ENCODE measurements at regions of chr9 and their contacts with region 1.

Region 1: DNA sequence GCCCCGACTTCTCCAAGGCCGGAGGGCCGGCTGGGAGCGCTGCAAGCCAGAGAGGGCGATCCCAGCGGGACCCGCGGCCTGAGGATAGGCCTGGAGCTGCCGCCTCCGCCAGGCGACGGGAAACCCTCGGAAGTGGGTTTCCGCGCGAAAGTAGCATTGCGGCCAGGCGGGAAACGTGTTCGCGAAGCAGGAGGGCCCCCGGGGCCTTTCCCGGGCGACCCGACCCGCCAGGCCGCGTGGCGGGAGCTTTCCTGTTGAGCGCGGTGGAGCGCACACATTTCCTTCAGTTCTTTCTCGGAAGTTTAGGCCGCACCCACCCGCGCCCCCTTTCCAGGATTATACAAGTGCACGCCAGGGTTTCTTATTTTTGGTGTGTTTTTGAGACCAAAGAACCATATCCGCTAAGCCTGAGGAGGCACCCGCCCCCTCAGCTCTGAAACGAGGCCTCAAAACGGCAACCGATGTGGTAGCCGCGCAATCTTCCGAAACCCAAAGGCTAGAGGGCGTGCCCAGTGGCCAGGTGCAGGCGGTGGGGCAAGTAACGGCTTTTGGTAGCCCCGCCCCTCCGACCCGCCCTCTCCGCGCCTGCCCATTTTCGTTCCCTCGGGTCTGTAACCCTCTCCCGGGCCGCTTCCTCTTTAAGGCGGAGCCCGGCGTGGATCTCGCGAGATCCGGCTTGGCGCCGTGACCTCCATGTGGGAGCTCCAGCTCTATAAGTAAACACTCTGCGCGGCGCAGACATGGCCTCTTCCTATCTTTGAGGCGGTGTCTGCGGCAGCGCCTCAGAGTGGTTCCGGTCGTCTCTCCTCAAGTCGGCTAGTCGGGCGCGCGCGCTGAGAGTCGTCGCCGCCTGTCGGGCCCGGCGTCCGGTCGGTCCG is at the start of gene UHRF2:
- DNase-seq: peak; percentile 45
- ATAC-seq: peak; percentile 97
- H3K4me3 ChIP-seq: peak within 1 kb of the TSS; percentile 65 to 74
- H3K27ac ChIP-seq: peak within 1 kb of the TSS; percentile 73; the same call in 1 of the 2 replicates
- H3K4me1 ChIP-seq: no peaks in the 10 kb centered on the region
- H3K27me3 ChIP-seq: no peaks in the 10 kb centered on the region
- CTCF ChIP-seq: no peak
- total RNA-seq, gene UHRF2: 17.2 TPM

Region 2: GRCh38 chr9:6330958-6331634 is 81.6 kb before region 1 on chr9:
- CTCF ChIA-PET with region 1: interaction called, 13 read pairs
- POLR2A ChIA-PET with region 1: no interaction called
- in situ Hi-C with region 1: no loop called
- intact Hi-C with region 1: no loop called
- DNase-seq: no peak
- ATAC-seq: no peak
- H3K4me3 ChIP-seq: no peak overlapping the region
- H3K27ac ChIP-seq: no peak overlapping the region
- H3K4me1 ChIP-seq: no peaks in the 10 kb centered on the region
- H3K27me3 ChIP-seq: no peaks in the 10 kb centered on the region
- CTCF ChIP-seq: no peak

Region 3: DNA sequence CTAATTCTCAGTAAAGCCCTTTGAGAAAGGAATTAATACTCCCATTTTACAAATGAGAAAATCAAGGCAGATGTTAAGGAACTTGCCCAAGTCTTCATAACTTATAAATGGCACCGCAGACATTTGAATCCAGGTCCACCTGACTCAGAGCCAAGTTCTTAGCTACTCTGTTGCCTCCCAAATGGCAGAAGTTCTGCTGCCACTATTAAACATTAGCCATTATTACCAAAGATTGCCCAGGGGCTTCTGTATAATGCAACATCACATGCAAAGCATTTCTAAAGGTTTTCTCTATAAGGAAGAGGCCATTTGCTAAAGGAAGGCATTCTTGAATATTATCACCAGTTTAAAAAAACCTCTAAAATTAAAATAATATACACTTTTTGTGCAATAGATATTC is 56.3 kb before region 1 on chr9:
- CTCF ChIA-PET with region 1: no interaction called
- POLR2A ChIA-PET with region 1: no interaction called
- in situ Hi-C with region 1: no loop called
- intact Hi-C with region 1: no loop called
- DNase-seq: no peak
- ATAC-seq: no peak
- H3K4me3 ChIP-seq: no peak overlapping the region
- H3K27ac ChIP-seq: no peak overlapping the region
- H3K4me1 ChIP-seq: no peaks in the 10 kb centered on the region
- H3K27me3 ChIP-seq: no peaks in the 10 kb centered on the region
- CTCF ChIP-seq: no peak